WTC11 (cell line): ENCODE measurements at regions of chr7 and their contacts with region 1.

Region 1: GRCh38 chr7:73978661-73979563 is 49.1 kb upstream of the ELN start:
- DNase-seq: peak; percentile 83
- ATAC-seq: peak; percentile 97
- H3K4me3 Mint-ChIP-seq: no peak overlapping the region
- H3K27ac Mint-ChIP-seq: 0 out of 2 replicates have a peak overlapping the region, but pooled peaks have one; percentile 63
- H3K4me1 Mint-ChIP-seq: no peaks in the 10 kb centered on the region
- H3K27me3 Mint-ChIP-seq: no peaks in the 10 kb centered on the region; the same call in 1 of the 2 replicates
- CTCF ChIP-seq: peak; percentile 38; the same call in 1 of the 2 replicates

Region 2: GRCh38 chr7:73865738-73866445 is 113.0 kb before region 1 on chr7:
- CTCF ChIA-PET with region 1: interaction called, 35 read pairs
- POLR2A ChIA-PET with region 1: no interaction called
- DNase-seq: peak; percentile 51
- ATAC-seq: peak; percentile 55
- H3K4me3 Mint-ChIP-seq: no peak overlapping the region
- H3K27ac Mint-ChIP-seq: no peak overlapping the region
- H3K4me1 Mint-ChIP-seq: peaks cover 10% of the 10 kb centered on the region
- H3K27me3 Mint-ChIP-seq: no peaks in the 10 kb centered on the region
- CTCF ChIP-seq: peak; percentile 41

Region 3: GRCh38 chr7:73892003-73892975 is 86.6 kb before region 1 on chr7:
- CTCF ChIA-PET with region 1: interaction called, 11 read pairs
- POLR2A ChIA-PET with region 1: no interaction called
- DNase-seq: no peak
- ATAC-seq: no peak
- H3K4me3 Mint-ChIP-seq: no peak overlapping the region
- H3K27ac Mint-ChIP-seq: no peak overlapping the region
- H3K4me1 Mint-ChIP-seq: peaks cover 4% of the 10 kb centered on the region; the same call in 1 of the 2 replicates
- H3K27me3 Mint-ChIP-seq: no peaks in the 10 kb centered on the region; the same call in 1 of the 2 replicates
- CTCF ChIP-seq: no peak

Region 4: DNA sequence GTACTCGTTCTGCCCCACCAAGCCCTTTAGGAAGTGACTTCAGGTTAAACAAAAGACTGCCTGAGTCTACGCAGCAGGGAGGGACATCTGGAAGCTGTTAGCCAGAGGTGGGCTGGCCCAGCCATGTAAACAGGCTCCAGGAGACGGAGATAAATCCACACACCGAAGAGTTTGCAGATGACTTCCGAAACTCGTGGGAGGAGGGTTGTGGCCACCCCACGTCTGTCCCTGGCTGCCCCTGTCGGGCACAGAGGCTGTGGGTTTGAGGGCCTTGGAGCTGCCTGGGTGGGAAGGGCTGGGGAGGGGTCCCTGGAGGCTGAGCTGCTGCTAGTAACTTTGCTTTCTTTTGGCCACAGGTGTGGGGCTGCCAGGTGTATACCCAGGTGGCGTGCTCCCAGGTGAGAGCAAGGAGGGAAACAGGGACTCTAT is 64.6 kb after region 1 on chr7:
- CTCF ChIA-PET with region 1: interaction called, 10 read pairs
- POLR2A ChIA-PET with region 1: no interaction called
- DNase-seq: peak; percentile 50
- ATAC-seq: peak; percentile 77
- H3K4me3 Mint-ChIP-seq: peak overlapping the region; percentile 45; the same call in 1 of the 2 replicates
- H3K27ac Mint-ChIP-seq: peak overlapping the region; percentile 84; the same call in 1 of the 2 replicates
- H3K4me1 Mint-ChIP-seq: peaks cover 48% of the 10 kb centered on the region
- H3K27me3 Mint-ChIP-seq: no peaks in the 10 kb centered on the region
- CTCF ChIP-seq: no peak